ENCODE measurements at regions of chr17 and their contacts with region 1.

Region 1: GRCh38 chr17:37174205-37174604 is 201.6 kb upstream of the C17orf78 start:
- DNase-seq: peak in 5 of 10 donors; percentile 19 to 70 (median 42)

Region 2: GRCh38 chr17:36994438-36994837 is 179.8 kb before region 1 on chr17:
- intact Hi-C with region 1: no loop called
- DNase-seq: no peak

Region 3: GRCh38 chr17:37089956-37090355 is 84.2 kb before region 1 on chr17:
- intact Hi-C with region 1: loop called (anchors 5 kb)
- DNase-seq: no peak

Region 4: GRCh38 chr17:37373530-37374159 is 199.4 kb after region 1 on chr17:
- intact Hi-C with region 1: no loop called
- DNase-seq: peak in 6 of 10 donors; percentile 43 to 89 (median 54)

Measured in posterior cingulate gyrus (tissue), 11 donors.